Gastrocnemius medialis (tissue), 4 donors: ENCODE measurements at regions of chrX and their contacts with region 1.

Region 1: GRCh38 chrX:102835504-102836146 is 101.4 kb upstream of the RAB40AL start:
- DNase-seq: no peak
- ATAC-seq: no peak
- H3K4me3 ChIP-seq: no peak overlapping the region
- H3K27ac ChIP-seq: no peak overlapping the region
- H3K4me1 ChIP-seq: no peaks in the 10 kb centered on the region
- H3K27me3 ChIP-seq: no peaks in the 10 kb centered on the region
- CTCF ChIP-seq: peak in 2 of 5 experiments; percentile 9 to 32
- POLR2A ChIP-seq: no peak

Region 2: GRCh38 chrX:102498732-102499131 is 336.9 kb before region 1 on chrX:
- in situ Hi-C with region 1: loop called in 1 of 4 experiments (anchors 25 kb)
- intact Hi-C with region 1: no loop called
- DNase-seq: no peak
- ATAC-seq: no peak
- H3K4me3 ChIP-seq: no peak overlapping the region
- H3K27ac ChIP-seq: no peak overlapping the region
- H3K4me1 ChIP-seq: no peaks in the 10 kb centered on the region
- H3K27me3 ChIP-seq: peaks cover 0 to 5% (median 0%) of the 10 kb centered on the region in 3 donors
- CTCF ChIP-seq: no peak
- POLR2A ChIP-seq: no peak